A673 (cell line): ENCODE measurements at regions of chr22 and their contacts with region 1.

Region 1: DNA sequence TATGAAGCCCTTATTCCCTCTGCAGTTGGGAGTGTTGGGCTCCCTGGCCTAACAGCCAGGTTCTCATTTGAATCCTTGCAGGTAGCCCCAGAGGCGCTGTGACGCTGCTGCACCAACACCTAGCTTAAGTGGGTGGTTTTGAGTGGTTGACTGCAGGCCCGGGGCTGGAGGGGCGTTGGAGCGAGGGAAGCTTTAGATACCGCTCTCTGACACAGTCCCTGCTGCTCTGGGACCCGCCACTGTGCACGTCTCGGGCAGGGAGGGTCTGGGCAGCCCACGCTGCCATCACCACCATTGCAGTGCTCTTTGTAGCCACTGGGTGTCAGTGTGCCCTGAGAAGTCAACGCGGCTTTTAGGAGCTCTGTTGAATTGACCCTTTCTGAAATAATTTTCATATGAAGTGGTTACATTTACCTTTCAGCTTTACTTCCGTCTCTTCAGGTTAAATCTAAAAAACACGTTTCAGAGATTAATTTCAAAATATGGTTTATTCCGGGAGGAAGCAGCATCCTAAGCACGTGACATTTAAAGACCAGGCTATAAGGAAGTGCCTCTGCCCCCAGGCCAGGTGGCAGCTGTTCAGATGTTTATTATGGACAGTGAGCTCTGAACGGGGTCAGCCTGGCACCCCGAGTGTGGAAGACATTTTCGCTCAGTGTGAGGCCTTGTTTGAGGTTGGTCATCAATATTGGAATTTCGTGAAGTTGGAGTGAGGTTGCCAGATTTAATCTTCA is 30.9 kb upstream of the PARVB start:
- DNase-seq: peak; percentile 72
- H3K4me3 ChIP-seq: no peak overlapping the region
- H3K27ac ChIP-seq: no peak overlapping the region
- H3K4me1 ChIP-seq: peaks cover 3% of the 10 kb centered on the region
- H3K27me3 ChIP-seq: no peaks in the 10 kb centered on the region
- CTCF ChIP-seq: peak; percentile 95

Region 2: DNA sequence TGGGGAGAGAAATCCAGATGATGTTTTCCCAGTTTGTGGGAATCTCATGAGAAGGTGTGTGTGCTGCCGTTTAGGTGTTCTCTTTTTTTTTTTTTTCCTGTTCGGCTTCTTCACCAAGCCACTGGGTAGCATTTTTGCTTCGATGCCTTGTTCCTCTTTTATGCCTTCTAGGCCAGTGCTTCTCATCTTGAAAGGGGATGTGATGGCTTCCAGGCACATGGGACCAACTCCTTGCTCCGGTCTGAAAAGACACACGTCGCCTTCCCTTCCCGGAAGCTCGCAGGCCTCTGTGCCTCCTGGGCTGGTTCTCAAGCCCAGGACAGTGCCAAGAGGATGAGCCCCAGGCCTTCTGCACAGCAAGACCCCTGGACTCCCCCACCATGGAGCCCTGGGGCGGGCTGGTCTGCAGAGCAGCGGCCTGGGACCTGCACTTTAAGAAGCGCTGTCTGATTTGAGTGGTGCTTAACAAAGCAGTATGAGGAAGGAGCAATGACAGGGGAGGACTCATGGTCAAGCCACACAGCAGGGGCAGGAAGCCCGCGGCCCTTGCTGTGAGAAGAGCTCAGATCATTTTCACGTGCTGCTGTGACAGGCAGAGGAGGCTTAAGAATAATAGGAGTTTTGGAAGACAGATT is 422.5 kb before region 1 on chr22:
- CTCF ChIA-PET with region 1: no interaction called
- POLR2A ChIA-PET with region 1: no interaction called
- intact Hi-C with region 1: no loop called
- DNase-seq: no peak
- H3K4me3 ChIP-seq: no peak overlapping the region
- H3K27ac ChIP-seq: no peak overlapping the region
- H3K4me1 ChIP-seq: peaks cover 13% of the 10 kb centered on the region
- H3K27me3 ChIP-seq: no peaks in the 10 kb centered on the region
- CTCF ChIP-seq: no peak

Region 3: GRCh38 chr22:44351685-44352377 is 358.6 kb after region 1 on chr22:
- CTCF ChIA-PET with region 1: no interaction called
- POLR2A ChIA-PET with region 1: no interaction called
- intact Hi-C with region 1: loop called (anchors 10 kb)
- DNase-seq: peak; percentile 69
- H3K4me3 ChIP-seq: no peak overlapping the region
- H3K27ac ChIP-seq: no peak overlapping the region
- H3K4me1 ChIP-seq: peaks cover 5% of the 10 kb centered on the region
- H3K27me3 ChIP-seq: no peaks in the 10 kb centered on the region
- CTCF ChIP-seq: no peak

Region 4: GRCh38 chr22:44625981-44626687 is 632.9 kb after region 1 on chr22:
- CTCF ChIA-PET with region 1: interaction called, 33 read pairs
- POLR2A ChIA-PET with region 1: no interaction called
- intact Hi-C with region 1: loop called (anchors 1 kb)
- DNase-seq: peak; percentile 74
- H3K4me3 ChIP-seq: no peak overlapping the region
- H3K27ac ChIP-seq: no peak overlapping the region
- H3K4me1 ChIP-seq: no peaks in the 10 kb centered on the region
- H3K27me3 ChIP-seq: no peaks in the 10 kb centered on the region
- CTCF ChIP-seq: peak; percentile 97